ENCODE measurements at regions of chr2 and their contacts with region 1.

Region 1: GRCh38 chr2:72892506-72893173 is 5.4 kb downstream of the SPR start:
- DNase-seq: peak; percentile 80

Region 2: GRCh38 chr2:72793798-72794440 is 98.7 kb before region 1 on chr2:
- intact Hi-C with region 1: no loop called
- DNase-seq: no peak

Region 3: DNA sequence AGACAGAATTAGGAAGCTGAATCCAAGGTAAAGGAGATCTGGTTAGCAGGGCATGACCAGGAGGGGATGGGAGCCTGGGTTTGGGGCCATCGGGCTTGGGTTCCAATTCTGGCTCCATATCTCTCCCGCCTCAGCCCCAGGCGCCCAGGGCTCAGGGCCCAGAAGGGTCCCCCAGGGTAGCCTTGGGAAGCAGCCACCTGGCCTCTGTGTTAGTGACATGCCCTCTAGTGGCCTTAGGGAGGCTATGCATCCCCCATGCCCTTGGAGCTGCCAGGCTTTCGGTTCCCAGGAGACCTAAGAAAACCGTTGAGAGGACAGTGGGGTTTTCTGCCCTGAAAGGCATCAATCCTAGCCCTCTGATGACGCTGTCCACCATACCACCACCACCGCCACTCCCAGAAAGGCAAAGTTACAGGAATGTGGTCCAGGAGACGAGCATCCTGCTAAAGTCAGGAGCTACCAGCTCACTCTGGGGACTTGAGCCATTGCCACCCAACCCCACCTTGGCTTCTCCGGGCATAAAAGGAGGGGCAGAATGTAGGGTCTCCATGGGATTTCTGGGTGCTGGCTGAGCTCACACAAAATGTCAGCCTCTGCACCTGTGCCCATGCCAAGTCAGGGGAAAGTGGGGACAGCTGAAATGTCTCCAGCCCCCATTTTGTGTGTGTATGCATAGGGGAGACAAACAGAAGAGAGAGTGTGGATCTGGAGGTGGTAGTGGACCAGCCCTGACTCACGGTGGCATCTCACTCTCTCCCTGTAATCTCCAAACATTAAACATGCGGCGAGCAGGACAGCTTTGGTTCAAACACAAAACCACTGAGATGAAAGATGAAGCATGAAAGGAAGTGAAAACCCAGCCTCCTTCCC is 81.2 kb after region 1 on chr2:
- intact Hi-C with region 1: loop called (anchors 5 kb)
- DNase-seq: no peak

Region 4: GRCh38 chr2:73071360-73072133 is 178.9 kb after region 1 on chr2 and contains the start of gene SFXN5:
- intact Hi-C with region 1: loop called (anchors 5 kb)
- DNase-seq: peak; percentile 100
- total RNA-seq, gene SFXN5: 13.3 TPM

Region 5: GRCh38 chr2:73156539-73157124 is 264.0 kb after region 1 on chr2:
- intact Hi-C with region 1: loop called (anchors 2 kb)
- DNase-seq: no peak

Region 6: DNA sequence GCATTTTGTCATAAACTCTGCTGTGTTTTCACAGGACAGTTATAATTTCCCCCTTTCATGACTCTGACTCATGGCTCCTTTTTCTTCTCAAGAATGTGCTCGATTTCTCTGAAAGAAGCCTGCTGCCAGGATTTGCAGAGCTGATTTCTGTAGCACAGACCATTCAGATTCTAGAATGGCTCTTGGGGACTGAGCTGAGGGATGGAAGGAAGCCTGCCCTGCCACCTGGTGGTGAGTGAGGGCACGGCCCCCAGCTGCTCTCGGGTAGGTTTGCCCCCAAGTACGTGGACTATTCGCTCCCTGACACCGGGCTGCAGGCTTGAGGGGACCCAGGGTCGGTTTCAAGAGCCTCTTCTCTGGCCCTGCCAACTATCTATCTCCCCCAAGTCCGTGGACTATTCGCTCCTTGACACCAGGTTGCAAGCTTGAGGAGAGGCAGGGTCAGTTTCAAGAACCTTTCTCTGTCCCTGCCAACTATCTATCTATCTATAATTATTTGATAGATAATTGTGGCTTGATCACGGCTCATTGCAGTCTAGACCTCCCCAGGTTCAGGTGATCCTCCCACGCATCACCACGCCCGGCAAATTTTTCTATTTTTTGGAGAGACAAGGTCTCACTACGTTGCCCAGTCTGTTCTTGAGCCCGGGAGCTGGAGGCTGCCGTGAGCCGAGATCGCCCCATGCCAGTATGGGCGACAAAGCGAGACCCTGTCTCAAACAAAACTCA is 320.0 kb after region 1 on chr2:
- intact Hi-C with region 1: loop called (anchors 5 kb)
- DNase-seq: peak; percentile 82

Measured in cardiac septum (tissue), 1 donor.